Esophagus muscularis mucosa (tissue), 4 donors: ENCODE measurements at regions of chr5 and their contacts with region 1.

Region 1: DNA sequence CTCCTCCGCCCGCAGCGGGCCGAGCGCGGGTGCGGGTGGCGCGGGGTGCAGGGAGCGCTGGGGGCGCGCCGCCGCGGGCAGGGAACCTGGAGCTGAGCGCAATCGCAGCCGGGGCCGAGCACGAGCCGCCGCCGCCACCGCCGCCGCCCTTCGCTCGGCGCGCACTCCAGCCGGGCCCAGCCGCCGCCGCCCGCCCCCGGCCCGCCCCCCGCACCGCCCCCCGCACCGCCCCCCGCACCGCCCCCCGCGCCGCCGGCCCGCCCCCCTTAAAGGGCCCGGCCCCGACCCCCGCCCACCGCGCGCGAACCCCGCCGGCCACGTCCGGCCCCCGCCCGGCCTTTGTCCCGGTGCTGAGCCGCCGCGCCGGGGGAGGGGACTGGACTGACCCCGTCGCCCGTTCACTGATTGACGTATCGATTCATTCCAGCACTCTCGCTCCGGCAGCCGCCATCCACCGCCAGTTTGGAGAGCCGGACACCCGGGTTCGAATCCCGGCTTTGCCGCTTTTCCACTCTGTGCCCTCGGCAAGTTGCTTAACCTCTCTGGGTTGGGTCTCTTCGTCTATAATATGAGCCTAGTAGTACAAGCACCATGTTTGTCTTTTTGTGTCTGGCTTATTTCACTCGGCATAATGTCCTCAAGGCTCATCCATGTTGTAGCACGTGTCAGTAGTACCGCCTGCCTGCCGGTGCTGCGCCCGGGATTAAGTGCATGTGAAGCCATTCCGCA is at the start of gene SH3PXD2B:
- DNase-seq: no peak
- H3K4me3 ChIP-seq: peak within 1 kb of the TSS; percentile 86 to 99 (median 94)
- H3K27ac ChIP-seq: peak within 1 kb of the TSS; percentile 91 to 93 (median 93)
- H3K4me1 ChIP-seq: peaks cover 42 to 61% (median 53%) of the 10 kb centered on the region in 4 donors
- H3K27me3 ChIP-seq: no peaks in the 10 kb centered on the region
- CTCF ChIP-seq: peak in 1 of 3 experiments; percentile 1
- EP300 ChIP-seq: no peak
- POLR2A ChIP-seq: no peak
- total RNA-seq, gene SH3PXD2B: 41.5 to 66.5 (median 49.2) TPM

Region 2: GRCh38 chr5:172283020-172283861 is 171.3 kb before region 1 on chr5 and contains the start of gene UBTD2:
- intact Hi-C with region 1: loop called (anchors 10 kb)
- DNase-seq: peak; percentile 94
- H3K4me3 ChIP-seq: peak within 1 kb of the TSS; percentile 95 to 98 (median 96)
- H3K27ac ChIP-seq: peak within 1 kb of the TSS; percentile 93 to 97 (median 95)
- H3K4me1 ChIP-seq: peaks cover 20 to 46% (median 34%) of the 10 kb centered on the region in 4 donors
- H3K27me3 ChIP-seq: no peaks in the 10 kb centered on the region
- CTCF ChIP-seq: peak; percentile 51 to 54 (median 51)
- EP300 ChIP-seq: no peak
- POLR2A ChIP-seq: no peak
- total RNA-seq, gene UBTD2: 19.4 to 20.0 (median 19.9) TPM

Region 3: DNA sequence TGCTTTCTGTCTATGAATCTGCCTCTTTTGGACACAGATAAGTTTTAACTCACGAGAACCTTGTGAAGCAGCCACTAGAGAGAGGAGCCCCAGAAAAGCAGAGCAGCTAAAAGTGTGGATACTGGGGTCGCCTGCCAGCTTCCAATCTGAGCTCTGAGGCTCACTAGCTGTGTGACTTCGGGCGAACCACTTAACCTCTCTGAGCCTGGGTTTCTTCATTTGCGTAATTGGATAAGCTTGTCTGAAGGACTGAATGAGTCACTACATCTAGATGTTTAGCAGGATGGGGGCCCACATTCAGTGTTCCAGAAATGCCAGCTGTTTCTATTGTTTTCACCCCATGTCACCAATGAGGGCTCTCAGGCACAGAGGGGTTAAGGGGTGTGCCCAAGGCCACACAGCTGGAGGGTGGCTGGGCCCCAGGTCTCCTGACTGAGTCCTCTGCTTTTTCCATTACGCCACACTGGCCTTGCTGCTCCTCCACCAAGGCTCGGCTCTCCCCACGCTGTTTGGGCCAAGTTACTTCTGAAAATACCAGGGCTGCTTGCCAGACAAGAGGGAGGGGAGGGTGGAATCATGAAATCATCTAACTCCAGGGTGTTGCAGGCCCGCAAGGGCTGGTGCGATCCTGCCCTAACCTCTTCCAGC is 36.4 kb before region 1 on chr5:
- intact Hi-C with region 1: loop called (anchors 5 kb)
- DNase-seq: peak; percentile 98
- H3K4me3 ChIP-seq: peak overlapping the region in 1 of 4 donors; percentile 2
- H3K27ac ChIP-seq: peak overlapping the region; percentile 86 to 92 (median 87)
- H3K4me1 ChIP-seq: peaks cover 65 to 97% (median 94%) of the 10 kb centered on the region in 4 donors
- H3K27me3 ChIP-seq: no peaks in the 10 kb centered on the region
- CTCF ChIP-seq: no peak
- EP300 ChIP-seq: peak; percentile 75
- POLR2A ChIP-seq: no peak